HCT116 (cell line): ENCODE measurements at regions of chr1 and their contacts with region 1.

Region 1: GRCh38 chr1:1122078-1122811 is 6.4 kb upstream of the C1orf159 start:
- DNase-seq: peak; percentile 21
- ATAC-seq: peak; percentile 99
- H3K4me3 ChIP-seq: peak overlapping the region; percentile 15 to 35; a peak in 3 of 4 replicates
- H3K27ac ChIP-seq: peak overlapping the region; percentile 38; the same call in 1 of the 2 replicates
- H3K4me1 ChIP-seq: peaks cover 2 to 10% of the 10 kb centered on the region in 2 experiments; a peak in 3 of 4 replicates
- H3K27me3 ChIP-seq: no peaks in the 10 kb centered on the region
- CTCF ChIP-seq: peak; percentile 82 to 91 (median 88)
- POLR2A ChIP-seq: no peak
- RAD21 ChIP-seq: peak; percentile 100

Region 2: GRCh38 chr1:1231400-1232223 is 109.4 kb after region 1 on chr1 and contains the start of gene SDF4:
- CTCF ChIA-PET with region 1: interaction called, 10 read pairs
- POLR2A ChIA-PET with region 1: no interaction called
- RAD21 ChIA-PET with region 1: interaction called in 1 of 2 experiments, 3 read pairs
- intact Hi-C with region 1: loop called (anchors 2 kb)
- DNase-seq: peak; percentile 88
- ATAC-seq: peak; percentile 91
- H3K4me3 ChIP-seq: peak within 1 kb of the TSS; percentile 68 to 87
- H3K27ac ChIP-seq: peak within 1 kb of the TSS; percentile 98
- H3K4me1 ChIP-seq: peaks cover 3 to 19% of the 10 kb centered on the region in 2 experiments; a peak in 1 of 4 replicates
- H3K27me3 ChIP-seq: no peaks in the 10 kb centered on the region
- CTCF ChIP-seq: no peak
- POLR2A ChIP-seq: peak; percentile 44
- RAD21 ChIP-seq: no peak
- total RNA-seq, gene SDF4: 133 TPM

Region 3: DNA sequence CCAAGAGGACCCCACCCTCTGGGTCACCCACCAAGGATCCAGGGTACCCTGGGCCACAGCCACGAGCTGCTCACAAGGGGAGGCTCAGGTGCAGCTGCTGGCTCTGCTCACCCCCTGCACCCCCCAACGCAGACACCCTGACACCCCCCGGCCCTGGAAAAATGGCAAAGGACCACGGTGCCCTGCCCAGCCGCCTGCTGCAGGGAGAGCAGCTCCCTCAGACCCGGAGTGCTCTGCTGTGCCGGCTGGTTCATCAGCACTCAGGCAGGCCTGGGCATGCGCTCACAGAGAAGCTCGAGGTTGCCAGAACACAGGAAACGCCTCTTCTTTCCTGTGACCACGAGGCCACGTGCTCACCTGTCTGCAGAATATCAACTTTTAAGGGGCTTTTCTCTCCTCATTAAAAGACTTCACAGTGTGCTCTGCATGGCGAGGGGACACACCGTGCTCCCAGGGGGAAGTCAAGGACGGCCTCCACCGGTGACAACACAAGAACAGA is 128.6 kb after region 1 on chr1:
- CTCF ChIA-PET with region 1: interaction called, 16 read pairs
- POLR2A ChIA-PET with region 1: no interaction called
- RAD21 ChIA-PET with region 1: interaction called, 3 to 6 read pairs
- intact Hi-C with region 1: loop called (anchors 2 kb)
- DNase-seq: no peak
- ATAC-seq: no peak; the same call in 1 of the 2 replicates
- H3K4me3 ChIP-seq: no peak overlapping the region
- H3K27ac ChIP-seq: peak overlapping the region; percentile 58
- H3K4me1 ChIP-seq: peaks cover 4 to 8% of the 10 kb centered on the region in 2 experiments; a peak in 3 of 4 replicates
- H3K27me3 ChIP-seq: no peaks in the 10 kb centered on the region
- CTCF ChIP-seq: no peak
- POLR2A ChIP-seq: no peak
- RAD21 ChIP-seq: no peak

Region 4: DNA sequence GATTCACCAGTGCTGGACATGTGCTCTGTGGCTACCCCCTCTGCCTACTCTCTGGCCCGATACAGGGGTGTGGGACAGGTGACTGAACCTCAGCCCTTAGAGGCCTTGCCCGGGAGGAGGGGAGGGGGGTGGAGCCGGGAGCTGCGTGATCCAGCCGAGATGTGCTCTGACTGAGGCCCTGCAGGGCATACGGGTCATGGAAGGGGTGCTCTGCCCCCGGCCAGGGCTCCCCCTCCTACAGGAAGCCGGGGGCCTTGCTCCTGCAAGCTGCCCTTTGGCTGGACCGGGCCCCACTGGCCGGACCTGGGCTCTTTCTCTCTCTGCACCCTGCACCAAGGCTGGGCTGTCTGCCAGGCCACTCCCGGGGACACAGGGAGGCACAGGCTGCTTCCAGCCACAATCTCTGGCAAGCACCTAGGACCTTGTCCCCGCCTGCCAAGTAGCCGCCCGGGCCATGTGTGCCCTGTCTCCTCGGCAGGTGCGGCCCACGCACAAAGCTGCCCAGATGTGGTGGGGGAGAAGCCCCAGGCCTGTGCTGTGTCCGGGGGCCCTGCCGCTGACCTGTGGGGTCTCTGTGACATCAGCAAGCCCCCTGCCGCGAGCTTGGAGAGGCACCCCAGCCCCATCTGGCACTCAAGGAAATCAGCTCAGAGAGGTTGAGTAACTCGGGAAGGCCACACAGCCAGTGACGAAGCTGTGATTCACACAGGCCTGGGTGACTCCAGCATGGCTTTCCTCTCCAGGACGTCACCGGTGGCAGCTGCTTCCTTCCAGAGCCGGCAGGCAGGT is 159.5 kb after region 1 on chr1:
- CTCF ChIA-PET with region 1: no interaction called
- POLR2A ChIA-PET with region 1: no interaction called
- RAD21 ChIA-PET with region 1: no interaction called
- intact Hi-C with region 1: no loop called
- DNase-seq: no peak
- ATAC-seq: 0 out of 2 replicates have a peak, but pooled peaks have one; percentile 35
- H3K4me3 ChIP-seq: no peak overlapping the region
- H3K27ac ChIP-seq: no peak overlapping the region; the same call in 1 of the 2 replicates
- H3K4me1 ChIP-seq: peaks cover 0 to 26% of the 10 kb centered on the region in 2 experiments; a peak in 3 of 4 replicates
- H3K27me3 ChIP-seq: no peaks in the 10 kb centered on the region
- CTCF ChIP-seq: no peak
- POLR2A ChIP-seq: no peak
- RAD21 ChIP-seq: no peak

Region 5: GRCh38 chr1:1297802-1298424 is 175.7 kb after region 1 on chr1:
- CTCF ChIA-PET with region 1: no interaction called
- POLR2A ChIA-PET with region 1: no interaction called
- RAD21 ChIA-PET with region 1: no interaction called
- intact Hi-C with region 1: no loop called
- DNase-seq: no peak
- ATAC-seq: no peak
- H3K4me3 ChIP-seq: no peak overlapping the region
- H3K27ac ChIP-seq: no peak overlapping the region
- H3K4me1 ChIP-seq: peaks cover 0 to 15% of the 10 kb centered on the region in 2 experiments; a peak in 2 of 4 replicates
- H3K27me3 ChIP-seq: no peaks in the 10 kb centered on the region
- CTCF ChIP-seq: no peak
- POLR2A ChIP-seq: no peak
- RAD21 ChIP-seq: no peak